ENCODE measurements at regions of chrX and their contacts with region 1.

Region 1: GRCh38 chrX:48521353-48522243 is at the start of gene EBP:
- DNase-seq: peak; percentile 88

Region 2: DNA sequence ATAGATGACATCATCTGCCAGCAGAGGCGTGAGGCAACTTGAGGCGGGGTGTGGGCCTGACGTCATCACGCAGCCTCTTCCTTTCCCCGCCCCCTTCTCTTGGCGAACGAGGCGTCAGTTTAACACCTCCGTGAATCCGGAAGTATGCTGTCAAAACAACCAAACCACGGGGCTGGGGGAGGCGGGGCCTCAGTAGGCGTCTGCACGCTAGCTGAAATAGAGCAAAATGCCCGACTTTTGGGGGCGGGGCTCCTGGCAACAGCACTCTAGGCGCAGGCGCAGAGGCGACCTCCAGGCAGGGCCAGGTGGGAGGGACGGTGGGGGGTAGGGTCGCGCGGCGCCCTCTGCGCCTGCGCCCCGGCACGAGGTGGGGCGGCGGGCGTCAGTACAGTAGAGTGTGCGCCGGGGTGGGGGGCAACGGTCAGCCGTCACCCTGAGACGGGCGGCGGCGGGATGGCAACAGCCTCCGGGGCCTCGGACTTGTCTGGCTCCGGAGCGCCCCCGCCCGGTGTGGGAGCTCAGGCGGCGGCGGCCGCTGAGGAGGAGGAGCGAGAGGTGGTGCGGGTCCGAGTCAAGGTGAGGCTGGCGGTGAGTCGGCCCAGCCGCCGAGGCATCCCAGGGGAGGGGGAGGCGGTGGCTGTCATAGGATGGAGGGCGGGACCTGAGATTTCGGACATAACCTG is 17.9 kb after region 1 on chrX and contains the start of gene TBC1D25:
- CTCF ChIA-PET with region 1: no interaction called
- POLR2A ChIA-PET with region 1: interaction called, 10 read pairs
- DNase-seq: peak; percentile 89

Region 3: GRCh38 chrX:48558271-48558670 is 36.7 kb after region 1 on chrX:
- CTCF ChIA-PET with region 1: no interaction called
- POLR2A ChIA-PET with region 1: no interaction called
- DNase-seq: peak; percentile 1

Region 4: GRCh38 chrX:48617542-48618340 is 96.1 kb after region 1 on chrX:
- CTCF ChIA-PET with region 1: no interaction called
- POLR2A ChIA-PET with region 1: no interaction called
- DNase-seq: no peak

Measured in HEK293T (cell line).